Activated naive CD4-positive, alpha-beta T cell treated with anti-CD3 and anti-CD28 coated beads for 36 hours (primary cell): ENCODE measurements at regions of chr1 and their contacts with region 1.

Region 1: GRCh38 chr1:67430352-67431155 is at the start of gene SERBP1:
- DNase-seq: peak; percentile 97
- H3K4me3 Mint-ChIP-seq: peak within 1 kb of the TSS; percentile 97
- H3K27ac Mint-ChIP-seq: peak within 1 kb of the TSS; percentile 98
- H3K4me1 Mint-ChIP-seq: peaks cover 44% of the 10 kb centered on the region
- H3K27me3 Mint-ChIP-seq: no peaks in the 10 kb centered on the region
- total RNA-seq, gene SERBP1: 527 to 537 TPM

Region 2: GRCh38 chr1:67053785-67054772 is 376.5 kb before region 1 on chr1 and contains the start of gene SLC35D1:
- CTCF ChIA-PET with region 1: no interaction called
- intact Hi-C with region 1: loop called (anchors 1 kb)
- DNase-seq: peak; percentile 81
- H3K4me3 Mint-ChIP-seq: peak within 1 kb of the TSS; percentile 82
- H3K27ac Mint-ChIP-seq: peak within 1 kb of the TSS; percentile 93
- H3K4me1 Mint-ChIP-seq: peaks cover 19% of the 10 kb centered on the region
- H3K27me3 Mint-ChIP-seq: no peaks in the 10 kb centered on the region
- total RNA-seq, gene SLC35D1: 10.5 to 11.1 TPM

Region 3: GRCh38 chr1:67285780-67286488 is 144.6 kb before region 1 on chr1:
- CTCF ChIA-PET with region 1: no interaction called
- intact Hi-C with region 1: loop called (anchors 1 kb)
- DNase-seq: peak; percentile 55
- H3K4me3 Mint-ChIP-seq: no peak overlapping the region
- H3K27ac Mint-ChIP-seq: peak overlapping the region; percentile 65
- H3K4me1 Mint-ChIP-seq: peaks cover 52% of the 10 kb centered on the region
- H3K27me3 Mint-ChIP-seq: no peaks in the 10 kb centered on the region

Region 4: DNA sequence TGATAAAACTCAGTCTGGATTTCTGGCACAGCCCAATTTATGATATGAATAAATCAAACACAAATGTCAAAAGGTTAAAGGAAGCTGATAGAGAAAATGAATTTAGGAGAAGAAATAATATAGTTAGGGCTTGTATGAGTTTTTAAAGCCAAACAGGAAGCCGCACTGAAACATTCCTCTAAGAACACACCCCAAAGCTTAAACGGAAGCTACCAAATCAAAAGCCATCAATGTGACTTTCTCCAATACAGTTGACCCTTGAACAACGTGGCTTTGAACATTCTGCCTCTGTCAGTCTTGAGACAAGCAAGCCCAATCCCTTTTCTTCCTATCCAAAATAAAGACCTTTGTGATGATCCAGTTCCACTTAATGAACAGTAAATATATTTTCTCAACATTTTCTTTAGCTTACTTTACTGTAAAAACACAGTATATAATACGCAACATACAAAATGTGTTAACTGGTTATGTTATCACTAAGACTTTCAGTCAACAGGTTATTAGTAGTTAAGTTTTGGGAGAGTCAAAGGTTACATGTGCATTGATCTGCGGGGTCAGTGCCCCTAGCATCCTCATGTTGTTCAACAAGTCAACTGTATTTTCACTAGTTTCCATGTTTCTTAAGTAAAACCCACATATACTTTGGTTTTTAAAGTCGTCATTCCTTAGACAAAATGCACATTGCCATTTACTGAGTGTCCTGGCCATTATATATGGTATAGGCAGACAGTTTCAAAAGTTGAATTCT is 11.5 kb before region 1 on chr1:
- CTCF ChIA-PET with region 1: no interaction called
- intact Hi-C with region 1: loop called (anchors 1 kb)
- DNase-seq: no peak
- H3K4me3 Mint-ChIP-seq: no peak overlapping the region
- H3K27ac Mint-ChIP-seq: peak overlapping the region; percentile 72
- H3K4me1 Mint-ChIP-seq: peaks cover 85% of the 10 kb centered on the region
- H3K27me3 Mint-ChIP-seq: no peaks in the 10 kb centered on the region

Region 5: DNA sequence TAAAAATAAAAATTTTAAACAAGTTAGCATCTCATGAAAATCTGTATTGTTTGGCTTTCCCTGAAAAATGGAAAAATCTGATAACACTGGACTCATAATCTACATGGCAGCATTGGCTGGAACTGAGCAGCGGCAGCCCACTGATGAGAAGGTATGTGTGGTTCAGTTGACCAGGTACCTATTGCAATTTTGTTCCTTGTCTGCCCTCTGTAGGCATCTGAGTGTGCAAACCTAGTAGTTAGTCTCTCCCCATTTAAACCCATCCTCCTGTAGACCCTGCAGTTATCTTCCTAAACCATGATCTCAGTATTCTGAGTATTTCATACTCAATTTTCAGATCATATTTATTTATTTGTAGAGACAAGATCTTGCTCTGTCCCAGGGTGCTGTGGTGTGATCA is 59.1 kb after region 1 on chr1:
- CTCF ChIA-PET with region 1: interaction called, 6 read pairs
- intact Hi-C with region 1: loop called (anchors 2 kb)
- DNase-seq: peak; percentile 40
- H3K4me3 Mint-ChIP-seq: no peak overlapping the region
- H3K27ac Mint-ChIP-seq: no peak overlapping the region
- H3K4me1 Mint-ChIP-seq: peaks cover under 1% of the 10 kb centered on the region
- H3K27me3 Mint-ChIP-seq: no peaks in the 10 kb centered on the region

Region 6: DNA sequence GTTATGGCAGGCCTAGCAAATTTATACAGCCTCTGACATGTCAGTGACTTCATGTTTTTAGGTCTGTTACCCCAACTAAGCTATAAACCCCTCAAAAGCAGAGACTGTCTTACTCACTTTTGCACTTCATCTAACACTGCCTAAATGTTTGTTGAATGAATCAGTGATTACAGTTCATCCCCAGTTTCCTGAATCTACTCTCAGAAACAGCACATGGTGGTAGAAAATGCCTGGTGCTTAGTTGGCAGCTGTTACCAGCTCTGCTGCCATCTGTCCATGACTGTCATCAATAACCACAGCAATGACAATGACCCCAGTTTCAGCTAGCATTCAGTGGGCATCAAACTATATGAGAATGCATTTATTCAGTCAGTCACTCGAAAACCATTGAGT is 110.2 kb after region 1 on chr1:
- CTCF ChIA-PET with region 1: no interaction called
- intact Hi-C with region 1: no loop called
- DNase-seq: no peak
- H3K4me3 Mint-ChIP-seq: no peak overlapping the region
- H3K27ac Mint-ChIP-seq: no peak overlapping the region
- H3K4me1 Mint-ChIP-seq: no peaks in the 10 kb centered on the region
- H3K27me3 Mint-ChIP-seq: no peaks in the 10 kb centered on the region